Calu3 (cell line): ENCODE measurements at regions of chr9 and their contacts with region 1.

Region 1: DNA sequence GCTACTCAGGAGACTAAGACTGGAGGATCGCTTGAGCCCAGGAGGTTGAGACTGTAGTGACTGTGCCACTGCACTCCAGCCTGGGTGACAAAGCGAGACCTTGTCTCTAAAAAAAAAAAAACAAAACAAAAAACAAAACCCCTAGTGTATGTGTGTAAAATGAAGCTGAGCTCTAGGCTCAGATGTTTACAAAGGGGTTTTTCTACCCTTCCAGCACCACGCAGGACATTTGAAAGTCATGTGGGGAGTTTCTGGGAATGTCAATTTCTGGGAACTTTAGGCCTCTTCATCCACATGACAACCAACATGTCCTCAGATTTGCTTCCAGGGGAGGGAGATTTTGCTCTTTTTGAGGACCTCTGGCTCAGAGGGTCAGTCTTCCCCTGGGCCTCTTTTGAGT is 42.4 kb upstream of the AIF1L start:
- DNase-seq: no peak
- H3K4me3 Mint-ChIP-seq: no peak overlapping the region
- H3K27ac Mint-ChIP-seq: no peak overlapping the region
- H3K4me1 Mint-ChIP-seq: no peaks in the 10 kb centered on the region
- H3K27me3 Mint-ChIP-seq: peaks cover 27% of the 10 kb centered on the region
- CTCF ChIP-seq: no peak

Region 2: DNA sequence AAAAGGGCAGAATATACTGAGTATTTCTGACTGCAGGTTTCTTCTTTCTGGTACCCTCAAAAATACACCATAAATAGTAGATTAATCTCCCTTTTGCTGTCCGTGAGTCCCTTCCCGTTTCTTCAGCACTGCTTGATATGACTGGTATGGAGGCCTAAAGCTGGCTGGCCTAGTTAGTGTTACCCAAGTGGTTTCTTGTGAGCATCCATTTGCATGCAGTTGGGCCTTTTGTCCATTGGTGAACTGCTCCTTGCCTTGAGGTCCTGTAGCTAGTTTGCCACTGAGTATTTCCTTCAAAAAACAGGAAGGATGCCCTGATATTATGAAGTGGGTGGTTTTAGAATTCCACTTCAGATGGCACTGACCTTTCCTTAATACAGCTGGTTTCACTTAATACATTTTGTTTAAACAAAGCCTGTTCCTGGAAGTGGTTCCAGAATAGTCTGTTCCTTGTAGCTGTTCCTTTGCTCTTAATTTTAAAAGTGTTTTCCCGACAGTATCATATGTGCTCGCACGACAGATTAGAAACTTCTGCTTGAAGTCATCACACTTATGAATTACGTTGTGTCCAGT is 258.9 kb before region 1 on chr9:
- CTCF ChIA-PET with region 1: no interaction called
- intact Hi-C with region 1: no loop called
- DNase-seq: no peak
- H3K4me3 Mint-ChIP-seq: no peak overlapping the region
- H3K27ac Mint-ChIP-seq: no peak overlapping the region
- H3K4me1 Mint-ChIP-seq: no peaks in the 10 kb centered on the region
- H3K27me3 Mint-ChIP-seq: no peaks in the 10 kb centered on the region
- CTCF ChIP-seq: no peak

Region 3: GRCh38 chr9:130918870-130919558 is 134.9 kb before region 1 on chr9:
- CTCF ChIA-PET with region 1: no interaction called
- intact Hi-C with region 1: no loop called
- DNase-seq: no peak
- H3K4me3 Mint-ChIP-seq: no peak overlapping the region
- H3K27ac Mint-ChIP-seq: no peak overlapping the region
- H3K4me1 Mint-ChIP-seq: no peaks in the 10 kb centered on the region
- H3K27me3 Mint-ChIP-seq: peaks cover 44% of the 10 kb centered on the region
- CTCF ChIP-seq: no peak

Region 4: DNA sequence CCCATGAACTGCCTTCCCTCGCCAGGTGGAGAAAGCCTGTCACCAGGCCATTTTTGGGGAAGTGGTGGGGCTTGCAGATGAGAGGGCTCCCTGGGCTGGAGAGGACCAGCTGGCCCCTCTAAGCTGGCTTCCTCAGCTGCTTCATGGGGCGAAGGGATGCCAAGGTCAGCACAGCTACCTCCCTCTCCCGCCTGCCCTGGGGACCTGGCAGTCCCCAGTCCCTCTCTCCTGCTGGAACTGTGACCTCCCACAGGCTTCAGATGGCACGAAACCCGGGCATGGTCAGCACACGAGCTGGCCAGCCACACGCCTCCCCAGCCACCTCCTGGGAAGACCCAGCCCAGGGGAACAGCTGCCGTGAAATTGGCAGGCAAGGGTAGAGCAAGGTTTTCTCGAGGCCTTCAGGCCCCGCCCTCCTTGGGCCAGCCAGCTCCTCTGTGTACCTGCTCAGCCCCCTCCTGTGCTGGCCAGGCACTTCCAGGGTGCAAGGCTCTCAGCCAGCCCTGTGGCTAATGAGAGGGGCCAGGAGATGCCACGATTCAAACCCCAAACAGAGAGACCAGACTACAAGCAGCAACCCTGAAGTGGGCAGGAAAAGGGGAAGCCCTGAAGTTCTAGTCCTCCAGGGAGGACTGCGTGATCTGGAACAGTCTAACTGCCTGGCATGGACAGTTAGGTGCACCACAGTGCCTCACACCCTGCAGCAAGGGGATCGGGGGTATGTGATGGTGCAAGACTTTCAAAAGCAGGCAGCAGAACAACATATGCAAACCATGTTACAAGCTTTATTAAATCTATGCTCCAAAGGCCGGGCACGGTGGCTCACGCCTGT is 248.6 kb after region 1 on chr9:
- CTCF ChIA-PET with region 1: interaction called, 12 read pairs
- intact Hi-C with region 1: no loop called
- DNase-seq: no peak
- H3K4me3 Mint-ChIP-seq: no peak overlapping the region
- H3K27ac Mint-ChIP-seq: no peak overlapping the region
- H3K4me1 Mint-ChIP-seq: no peaks in the 10 kb centered on the region
- H3K27me3 Mint-ChIP-seq: peaks cover 15% of the 10 kb centered on the region
- CTCF ChIP-seq: no peak